Activated CD8-positive, alpha-beta T cell treated with anti-CD3 and anti-CD28 coated beads, Interleukin-2, amount 10 ng/mL, durations not matched to agents 7 days and 5 days (primary cell): ENCODE measurements at regions of chr4 and their contacts with region 1.

Region 1: DNA sequence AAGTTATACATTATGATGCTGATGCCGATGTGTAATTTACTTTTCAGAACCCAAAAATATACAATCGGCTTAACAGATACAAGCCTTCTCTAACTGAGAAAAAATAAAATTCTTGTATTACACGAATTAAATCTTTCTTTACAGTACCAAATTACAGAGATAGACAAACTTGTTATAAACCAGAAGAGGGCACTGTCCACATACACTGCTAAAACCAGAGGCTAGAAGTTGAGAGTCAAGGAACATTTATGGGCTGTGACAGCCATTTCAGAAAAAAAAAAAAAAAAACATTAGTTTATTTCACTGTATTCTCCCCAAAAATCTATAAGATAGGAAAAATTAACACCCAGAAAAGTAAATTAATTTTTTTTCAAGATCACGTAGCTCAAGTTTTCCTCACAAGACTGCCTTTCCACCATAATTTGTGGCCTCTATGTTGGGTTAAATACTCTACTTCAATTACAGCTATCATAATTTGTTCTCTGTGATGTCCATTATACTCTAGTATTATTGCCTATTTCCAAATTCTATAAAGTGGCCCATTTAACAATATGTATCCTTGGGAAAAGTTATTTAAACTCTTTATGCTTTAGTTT is 12.0 kb downstream of the EREG start:
- DNase-seq: no peak
- ATAC-seq: no peak
- H3K4me3 Mint-ChIP-seq: no peak overlapping the region
- H3K27ac Mint-ChIP-seq: no peak overlapping the region
- H3K4me1 Mint-ChIP-seq: no peaks in the 10 kb centered on the region
- H3K27me3 Mint-ChIP-seq: peaks cover 6% of the 10 kb centered on the region

Region 2: GRCh38 chr4:74431113-74431826 is 54.3 kb after region 1 on chr4:
- CTCF ChIA-PET with region 1: no interaction called
- POLR2A ChIA-PET with region 1: no interaction called
- DNase-seq: no peak
- ATAC-seq: no peak
- H3K4me3 Mint-ChIP-seq: no peak overlapping the region
- H3K27ac Mint-ChIP-seq: no peak overlapping the region
- H3K4me1 Mint-ChIP-seq: no peaks in the 10 kb centered on the region
- H3K27me3 Mint-ChIP-seq: peaks cover 7% of the 10 kb centered on the region

Region 3: GRCh38 chr4:74531963-74532794 is 155.2 kb after region 1 on chr4:
- CTCF ChIA-PET with region 1: interaction called, 27 read pairs
- POLR2A ChIA-PET with region 1: no interaction called
- DNase-seq: no peak
- ATAC-seq: peak; percentile 51
- H3K4me3 Mint-ChIP-seq: no peak overlapping the region
- H3K27ac Mint-ChIP-seq: no peak overlapping the region
- H3K4me1 Mint-ChIP-seq: no peaks in the 10 kb centered on the region
- H3K27me3 Mint-ChIP-seq: peaks cover under 1% of the 10 kb centered on the region

Region 4: DNA sequence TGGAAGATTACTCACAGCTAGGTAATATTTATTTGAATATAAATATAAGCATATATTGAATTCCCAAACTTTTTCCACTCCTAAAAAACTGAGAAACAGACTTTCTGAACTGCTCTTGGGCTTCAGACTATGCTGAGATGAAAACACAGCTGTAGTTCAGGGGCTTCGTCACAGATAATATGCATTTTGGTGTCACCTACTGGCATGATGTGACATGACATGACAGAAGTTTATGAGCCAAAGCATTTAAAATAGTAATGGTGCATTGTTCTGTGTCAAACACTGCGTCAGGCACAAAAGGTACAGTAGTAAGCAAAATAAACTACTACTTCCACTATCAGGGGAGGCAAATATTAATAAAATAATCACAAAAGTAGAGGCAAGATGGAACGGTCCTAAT is 246.1 kb after region 1 on chr4:
- CTCF ChIA-PET with region 1: interaction called, 18 read pairs
- POLR2A ChIA-PET with region 1: no interaction called
- DNase-seq: peak; percentile 30
- ATAC-seq: peak; percentile 42
- H3K4me3 Mint-ChIP-seq: no peak overlapping the region
- H3K27ac Mint-ChIP-seq: no peak overlapping the region
- H3K4me1 Mint-ChIP-seq: peaks cover 8% of the 10 kb centered on the region
- H3K27me3 Mint-ChIP-seq: no peaks in the 10 kb centered on the region